Activated B cell treated with CpG ODN at 0.5 μM for 24 hours (primary cell): ENCODE measurements at regions of chr1 and their contacts with region 1.

Region 1: DNA sequence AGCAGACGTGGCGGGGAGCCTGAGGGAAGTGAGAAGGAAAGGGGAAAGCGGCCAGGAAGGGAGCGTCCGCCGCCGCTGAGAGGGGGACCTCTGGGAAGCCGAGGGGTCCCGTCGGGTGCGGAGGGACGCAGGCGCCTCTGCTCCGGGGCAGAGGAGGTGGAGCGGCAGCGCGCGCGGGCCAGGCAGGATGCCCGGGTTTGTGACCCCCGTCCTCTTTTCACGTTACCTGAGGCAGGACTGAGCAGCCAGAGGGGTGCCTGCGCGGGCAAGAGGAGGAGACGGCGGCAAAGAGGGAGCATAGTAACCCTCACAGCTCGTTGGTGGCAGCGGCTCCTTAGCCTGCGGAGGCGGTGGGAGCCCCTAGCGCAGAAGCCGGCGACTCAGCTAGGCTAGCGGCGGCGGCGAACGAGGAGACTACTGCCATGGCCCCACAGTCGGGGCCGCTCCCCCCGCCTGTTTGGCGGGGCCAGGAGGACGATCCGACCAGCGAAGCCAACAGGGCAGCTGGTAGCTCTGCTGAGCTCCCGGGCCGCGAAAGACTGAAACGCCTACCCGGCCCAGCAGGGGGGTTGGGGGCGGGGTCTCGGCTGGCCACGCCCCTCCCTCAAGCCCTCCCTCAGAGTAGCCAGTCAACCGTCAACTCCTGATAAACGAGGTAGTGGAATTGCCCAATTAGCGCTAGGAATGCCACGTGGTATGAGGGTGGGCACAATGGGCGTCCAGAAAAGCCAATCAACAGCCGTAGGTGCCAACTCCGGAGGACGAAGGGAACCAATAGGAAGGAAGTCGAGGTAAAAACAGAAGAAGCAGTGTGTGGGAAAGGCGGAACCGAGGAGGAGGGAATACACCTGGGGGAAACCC is at the start of gene TESK2:
- DNase-seq: peak; percentile 95
- ATAC-seq: peak; percentile 89
- H3K4me3 Mint-ChIP-seq: no peak within 1 kb of the TSS
- H3K27ac Mint-ChIP-seq: no peak within 1 kb of the TSS
- H3K4me1 Mint-ChIP-seq: peaks cover 12% of the 10 kb centered on the region
- H3K27me3 Mint-ChIP-seq: no peaks in the 10 kb centered on the region
- CTCF ChIP-seq: no peak
- total RNA-seq, gene TESK2: 11.7 and 12.2 TPM in 2 replicates

Region 2: DNA sequence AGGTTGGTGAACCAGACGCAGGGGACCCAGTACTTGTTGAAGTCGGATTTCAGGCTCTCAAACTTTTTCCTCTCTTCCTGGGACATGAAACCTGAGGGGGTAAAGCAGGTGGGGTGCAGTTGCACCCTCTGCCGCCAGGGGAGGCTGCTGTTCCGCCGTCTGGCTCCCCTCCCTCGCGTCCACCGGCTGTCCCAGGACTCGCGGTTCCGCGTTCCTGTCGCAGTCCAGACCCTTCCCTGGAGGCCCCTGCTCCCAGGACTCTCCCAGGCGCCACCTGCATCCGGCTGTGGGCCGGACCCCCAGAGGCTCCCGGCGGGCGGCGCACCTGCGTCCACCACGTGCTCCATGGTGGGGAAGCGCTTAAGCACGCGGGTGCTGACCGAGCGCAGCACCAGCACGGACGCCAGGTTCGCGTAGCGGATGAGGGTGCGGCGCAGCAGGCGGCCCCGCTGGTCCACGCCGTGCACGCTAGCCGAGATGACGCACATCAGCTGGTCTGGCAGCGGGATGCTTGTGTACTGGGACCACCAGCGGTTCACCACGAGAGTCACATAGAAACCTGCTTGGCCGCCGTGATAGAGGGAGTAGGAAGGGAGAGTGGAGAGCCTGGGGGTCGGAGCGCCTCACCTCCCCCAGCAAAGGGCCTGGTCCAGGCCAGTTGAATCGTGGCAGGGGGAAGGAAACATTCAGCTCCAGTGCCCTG is 704.6 kb before region 1 on chr1:
- CTCF ChIA-PET with region 1: no interaction called
- POLR2A ChIA-PET with region 1: no interaction called
- intact Hi-C with region 1: loop called (anchors 1 kb)
- DNase-seq: peak; percentile 81
- ATAC-seq: peak; percentile 79
- H3K4me3 Mint-ChIP-seq: peak overlapping the region; percentile 75
- H3K27ac Mint-ChIP-seq: peak overlapping the region; percentile 86
- H3K4me1 Mint-ChIP-seq: peaks cover 32% of the 10 kb centered on the region
- H3K27me3 Mint-ChIP-seq: no peaks in the 10 kb centered on the region
- CTCF ChIP-seq: peak; percentile 100

Region 3: GRCh38 chr1:45339789-45340570 is 150.9 kb before region 1 on chr1 and contains the starts of genes MUTYH and TOE1:
- CTCF ChIA-PET with region 1: interaction called, 12 read pairs
- POLR2A ChIA-PET with region 1: interaction called, 33 read pairs
- intact Hi-C with region 1: loop called (anchors 1 kb)
- DNase-seq: peak; percentile 85
- ATAC-seq: peak; percentile 86
- H3K4me3 Mint-ChIP-seq: peak within 1 kb of the TSS; percentile 100
- H3K27ac Mint-ChIP-seq: peak within 1 kb of the TSS; percentile 99
- H3K4me1 Mint-ChIP-seq: peaks cover 39% of the 10 kb centered on the region
- H3K27me3 Mint-ChIP-seq: no peaks in the 10 kb centered on the region
- CTCF ChIP-seq: no peak
- total RNA-seq, gene MUTYH: 61.0 and 63.0 TPM in 2 replicates
- total RNA-seq, gene TOE1: 24.6 and 25.3 TPM in 2 replicates

Region 4: DNA sequence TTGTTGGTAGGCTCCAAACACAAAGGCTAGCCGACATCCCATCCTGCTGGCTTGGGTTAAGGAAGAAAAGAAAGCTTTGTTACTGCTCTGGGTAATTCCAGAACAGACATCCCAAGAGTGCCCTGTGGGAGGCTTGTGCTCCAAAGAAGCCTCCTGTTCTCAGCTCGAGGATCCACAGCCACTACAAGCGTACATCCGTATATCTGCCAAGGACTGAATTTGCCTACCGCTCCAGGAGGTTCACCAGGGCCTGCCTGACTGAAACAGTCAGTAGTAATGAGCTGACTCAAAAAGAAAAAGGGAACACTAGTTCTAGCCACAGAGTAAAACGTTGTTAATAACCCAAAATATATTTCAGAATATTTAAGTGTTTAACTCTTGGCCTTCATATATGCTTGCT is 125.8 kb before region 1 on chr1:
- CTCF ChIA-PET with region 1: interaction called, 326 read pairs
- POLR2A ChIA-PET with region 1: interaction called, 40 read pairs
- intact Hi-C with region 1: loop called (anchors 1 kb)
- DNase-seq: no peak
- ATAC-seq: peak; percentile 81
- H3K4me3 Mint-ChIP-seq: no peak overlapping the region
- H3K27ac Mint-ChIP-seq: peak overlapping the region; percentile 75
- H3K4me1 Mint-ChIP-seq: peaks cover 19% of the 10 kb centered on the region
- H3K27me3 Mint-ChIP-seq: no peaks in the 10 kb centered on the region
- CTCF ChIP-seq: no peak

Region 5: GRCh38 chr1:45393718-45394302 is 97.0 kb before region 1 on chr1:
- CTCF ChIA-PET with region 1: interaction called, 6 read pairs
- POLR2A ChIA-PET with region 1: interaction called, 70 read pairs
- intact Hi-C with region 1: loop called (anchors 1 kb)
- DNase-seq: peak; percentile 41
- ATAC-seq: peak; percentile 88
- H3K4me3 Mint-ChIP-seq: peak overlapping the region; percentile 62
- H3K27ac Mint-ChIP-seq: peak overlapping the region; percentile 94
- H3K4me1 Mint-ChIP-seq: peaks cover 52% of the 10 kb centered on the region
- H3K27me3 Mint-ChIP-seq: no peaks in the 10 kb centered on the region
- CTCF ChIP-seq: no peak

Region 6: DNA sequence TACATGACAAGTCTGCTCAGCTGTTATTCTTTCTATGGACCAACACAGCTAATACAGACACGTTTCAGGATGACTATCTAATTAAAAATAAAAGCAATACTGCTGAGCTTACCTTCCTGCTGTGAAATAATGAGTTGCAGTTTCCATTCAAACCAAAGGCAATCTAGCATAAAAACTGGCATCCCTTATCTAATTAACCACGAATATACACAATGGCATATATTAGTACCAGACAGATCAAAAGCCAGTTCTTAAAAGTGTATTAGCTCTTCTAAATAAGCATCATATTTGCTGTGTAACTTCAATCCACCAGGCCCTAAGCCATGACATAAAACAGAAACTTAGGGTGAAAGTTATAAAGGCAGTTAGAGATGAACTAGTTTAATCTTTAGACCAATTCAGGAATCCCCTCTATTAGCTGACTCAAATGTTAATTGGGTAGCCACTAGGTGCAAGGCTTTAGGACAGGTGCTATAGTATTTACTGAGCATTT is 20.5 kb before region 1 on chr1:
- CTCF ChIA-PET with region 1: interaction called, 4 read pairs
- POLR2A ChIA-PET with region 1: interaction called, 6 read pairs
- intact Hi-C with region 1: loop called (anchors 2 kb)
- DNase-seq: no peak
- ATAC-seq: peak; percentile 19
- H3K4me3 Mint-ChIP-seq: no peak overlapping the region
- H3K27ac Mint-ChIP-seq: no peak overlapping the region
- H3K4me1 Mint-ChIP-seq: peaks cover 50% of the 10 kb centered on the region
- H3K27me3 Mint-ChIP-seq: no peaks in the 10 kb centered on the region
- CTCF ChIP-seq: no peak

Region 7: GRCh38 chr1:45569962-45570581 is 79.2 kb after region 1 on chr1:
- CTCF ChIA-PET with region 1: interaction called, 34 read pairs
- POLR2A ChIA-PET with region 1: no interaction called
- intact Hi-C with region 1: no loop called
- DNase-seq: peak; percentile 48
- ATAC-seq: peak; percentile 98
- H3K4me3 Mint-ChIP-seq: no peak overlapping the region
- H3K27ac Mint-ChIP-seq: no peak overlapping the region
- H3K4me1 Mint-ChIP-seq: no peaks in the 10 kb centered on the region
- H3K27me3 Mint-ChIP-seq: no peaks in the 10 kb centered on the region
- CTCF ChIP-seq: peak; percentile 17

Region 8: GRCh38 chr1:45617618-45618017 is 126.8 kb after region 1 on chr1:
- CTCF ChIA-PET with region 1: no interaction called
- POLR2A ChIA-PET with region 1: no interaction called
- intact Hi-C with region 1: no loop called
- DNase-seq: no peak
- ATAC-seq: no peak
- H3K4me3 Mint-ChIP-seq: no peak overlapping the region
- H3K27ac Mint-ChIP-seq: no peak overlapping the region
- H3K4me1 Mint-ChIP-seq: peaks cover 19% of the 10 kb centered on the region
- H3K27me3 Mint-ChIP-seq: no peaks in the 10 kb centered on the region
- CTCF ChIP-seq: no peak